ENCODE measurements at regions of chr1 and their contacts with region 1.

Region 1: GRCh38 chr1:156146020-156146768 is 7.2 kb upstream of the SEMA4A start:
- DNase-seq: peak; percentile 54
- H3K4me3 Mint-ChIP-seq: peak overlapping the region; percentile 23
- H3K27ac Mint-ChIP-seq: peak overlapping the region; percentile 68
- H3K4me1 Mint-ChIP-seq: peaks cover 29% of the 10 kb centered on the region
- H3K27me3 Mint-ChIP-seq: no peaks in the 10 kb centered on the region

Region 2: DNA sequence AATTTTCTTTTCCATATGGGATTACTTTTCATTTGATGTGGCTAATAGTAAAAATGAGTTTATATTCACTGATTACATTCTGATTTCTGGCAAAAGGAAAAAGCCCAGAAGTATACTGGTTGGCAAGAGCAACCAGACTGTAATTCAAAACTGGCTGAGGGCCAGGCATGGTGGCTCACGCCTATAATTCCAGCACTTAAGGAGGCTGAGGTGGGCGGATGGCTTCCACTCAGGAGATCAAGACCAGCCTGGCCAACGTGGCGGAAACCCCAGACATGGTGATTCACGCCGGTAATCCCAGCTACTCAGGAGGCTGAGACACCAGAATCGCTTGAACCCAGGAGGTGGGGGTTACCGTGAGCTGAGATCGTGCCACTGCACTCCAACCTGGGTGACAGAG is 272.3 kb before region 1 on chr1:
- CTCF ChIA-PET with region 1: no interaction called
- POLR2A ChIA-PET with region 1: no interaction called
- DNase-seq: no peak
- H3K4me3 Mint-ChIP-seq: no peak overlapping the region
- H3K27ac Mint-ChIP-seq: no peak overlapping the region
- H3K4me1 Mint-ChIP-seq: no peaks in the 10 kb centered on the region
- H3K27me3 Mint-ChIP-seq: no peaks in the 10 kb centered on the region

Region 3: DNA sequence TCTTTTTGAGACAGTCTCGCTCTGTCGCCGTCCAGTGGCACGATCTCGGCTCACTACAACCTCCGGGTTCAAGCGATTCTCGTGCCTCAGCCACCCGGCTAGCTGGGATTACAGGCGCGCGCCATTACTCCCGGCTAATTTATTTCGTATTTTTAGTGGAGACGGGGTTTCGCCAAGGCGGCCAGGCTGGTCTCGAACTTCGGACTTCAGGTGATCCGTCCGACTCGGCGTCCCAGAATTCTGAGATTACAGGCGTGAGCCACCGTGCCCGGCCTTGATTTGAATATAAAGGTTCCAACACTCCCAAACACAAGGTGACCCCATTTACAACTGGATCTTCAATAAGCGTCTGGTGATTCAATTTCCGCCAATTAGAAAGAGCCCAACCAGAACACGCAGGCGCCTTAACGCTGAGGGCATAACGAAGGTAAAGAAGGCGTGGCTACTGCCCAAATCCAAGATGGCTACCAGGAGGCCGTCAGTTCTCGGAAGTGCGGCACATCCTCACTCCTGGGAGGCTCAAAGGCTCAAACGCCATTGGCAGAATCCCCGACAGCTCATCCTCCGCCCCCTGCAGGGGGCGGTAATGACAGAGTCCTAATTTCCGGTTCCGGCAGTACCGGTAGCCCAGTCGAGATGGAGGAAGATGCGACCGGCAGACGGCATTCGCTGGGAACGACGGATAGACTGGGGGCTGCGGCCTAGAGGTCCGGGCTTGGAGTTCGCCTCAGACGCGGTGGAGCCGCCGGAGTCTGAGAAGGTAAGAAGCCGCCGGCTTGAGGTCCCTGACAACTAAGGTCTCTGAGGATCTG is 47.5 kb after region 1 on chr1 and contains the start of gene SLC25A44:
- CTCF ChIA-PET with region 1: interaction called, 5 read pairs
- POLR2A ChIA-PET with region 1: interaction called, 14 read pairs
- DNase-seq: peak; percentile 98
- H3K4me3 Mint-ChIP-seq: peak within 1 kb of the TSS; percentile 85
- H3K27ac Mint-ChIP-seq: peak within 1 kb of the TSS; percentile 73
- H3K4me1 Mint-ChIP-seq: peaks cover 59% of the 10 kb centered on the region
- H3K27me3 Mint-ChIP-seq: no peaks in the 10 kb centered on the region
- total RNA-seq, gene SLC25A44: 27.7 to 36.3 TPM

Region 4: GRCh38 chr1:156319664-156320063 is 173.5 kb after region 1 on chr1:
- CTCF ChIA-PET with region 1: interaction called, 26 read pairs
- POLR2A ChIA-PET with region 1: interaction called, 3 read pairs
- DNase-seq: peak; percentile 27
- H3K4me3 Mint-ChIP-seq: no peak overlapping the region
- H3K27ac Mint-ChIP-seq: no peak overlapping the region
- H3K4me1 Mint-ChIP-seq: no peaks in the 10 kb centered on the region
- H3K27me3 Mint-ChIP-seq: no peaks in the 10 kb centered on the region

Measured in activated CD4-positive, alpha-beta memory T cell treated with anti-CD3 and anti-CD28 coated beads, Interleukin-2, amount 10 ng/mL, durations not matched to agents 7 days and 5 days (primary cell).